Activated CD4-positive, alpha-beta memory T cell treated with anti-CD3 and anti-CD28 coated beads for 36 hours (primary cell): ENCODE measurements at regions of chr4 and their contacts with region 1.

Region 1: GRCh38 chr4:99563310-99564186 is at the start of gene TRMT10A:
- DNase-seq: peak; percentile 98
- H3K4me3 Mint-ChIP-seq: peak within 1 kb of the TSS; percentile 93
- H3K27ac Mint-ChIP-seq: peak within 1 kb of the TSS; percentile 98
- H3K4me1 Mint-ChIP-seq: peaks cover 6% of the 10 kb centered on the region
- H3K27me3 Mint-ChIP-seq: peaks cover 7% of the 10 kb centered on the region
- total RNA-seq, gene TRMT10A: 5.6 to 8.9 TPM

Region 2: GRCh38 chr4:98260579-98261290 is 1302.8 kb before region 1 on chr4:
- CTCF ChIA-PET with region 1: no interaction called
- POLR2A ChIA-PET with region 1: no interaction called
- intact Hi-C with region 1: loop called (anchors 10 kb)
- DNase-seq: peak; percentile 96
- H3K4me3 Mint-ChIP-seq: peak overlapping the region; percentile 95
- H3K27ac Mint-ChIP-seq: peak overlapping the region; percentile 97
- H3K4me1 Mint-ChIP-seq: peaks cover 43% of the 10 kb centered on the region
- H3K27me3 Mint-ChIP-seq: no peaks in the 10 kb centered on the region

Region 3: GRCh38 chr4:99504804-99505569 is 58.6 kb before region 1 on chr4:
- CTCF ChIA-PET with region 1: no interaction called
- POLR2A ChIA-PET with region 1: no interaction called
- intact Hi-C with region 1: loop called (anchors 1 kb)
- DNase-seq: no peak
- H3K4me3 Mint-ChIP-seq: no peak overlapping the region
- H3K27ac Mint-ChIP-seq: no peak overlapping the region
- H3K4me1 Mint-ChIP-seq: peaks cover 46% of the 10 kb centered on the region
- H3K27me3 Mint-ChIP-seq: no peaks in the 10 kb centered on the region

Region 4: GRCh38 chr4:99763635-99764101 is 200.1 kb after region 1 on chr4:
- CTCF ChIA-PET with region 1: no interaction called
- POLR2A ChIA-PET with region 1: no interaction called
- intact Hi-C with region 1: loop called (anchors 2 kb)
- DNase-seq: peak; percentile 38
- H3K4me3 Mint-ChIP-seq: no peak overlapping the region
- H3K27ac Mint-ChIP-seq: no peak overlapping the region
- H3K4me1 Mint-ChIP-seq: peaks cover 24% of the 10 kb centered on the region
- H3K27me3 Mint-ChIP-seq: peaks cover 12% of the 10 kb centered on the region

Region 5: DNA sequence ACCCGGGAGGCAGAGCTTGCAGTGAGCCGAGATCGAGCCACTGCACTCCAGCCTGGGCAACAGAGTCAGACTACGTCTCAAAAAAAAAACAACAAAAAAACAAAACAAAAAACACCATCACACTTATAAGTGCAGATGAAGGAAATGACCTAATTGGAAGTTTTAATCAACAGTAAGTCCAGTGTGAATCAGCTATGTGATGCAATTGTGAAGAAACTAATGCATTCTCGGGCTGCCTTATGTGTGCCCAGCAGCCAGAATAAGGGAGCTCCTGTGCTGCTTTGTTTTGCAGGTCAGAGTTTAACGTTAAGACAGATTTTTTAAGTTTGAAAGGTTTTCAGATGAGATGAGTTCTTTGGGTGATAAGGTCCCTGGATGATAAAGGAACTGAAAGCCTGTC is 263.9 kb after region 1 on chr4:
- CTCF ChIA-PET with region 1: no interaction called
- POLR2A ChIA-PET with region 1: no interaction called
- intact Hi-C with region 1: no loop called
- DNase-seq: no peak
- H3K4me3 Mint-ChIP-seq: no peak overlapping the region
- H3K27ac Mint-ChIP-seq: peak overlapping the region; percentile 55
- H3K4me1 Mint-ChIP-seq: peaks cover 51% of the 10 kb centered on the region
- H3K27me3 Mint-ChIP-seq: no peaks in the 10 kb centered on the region

Region 6: DNA sequence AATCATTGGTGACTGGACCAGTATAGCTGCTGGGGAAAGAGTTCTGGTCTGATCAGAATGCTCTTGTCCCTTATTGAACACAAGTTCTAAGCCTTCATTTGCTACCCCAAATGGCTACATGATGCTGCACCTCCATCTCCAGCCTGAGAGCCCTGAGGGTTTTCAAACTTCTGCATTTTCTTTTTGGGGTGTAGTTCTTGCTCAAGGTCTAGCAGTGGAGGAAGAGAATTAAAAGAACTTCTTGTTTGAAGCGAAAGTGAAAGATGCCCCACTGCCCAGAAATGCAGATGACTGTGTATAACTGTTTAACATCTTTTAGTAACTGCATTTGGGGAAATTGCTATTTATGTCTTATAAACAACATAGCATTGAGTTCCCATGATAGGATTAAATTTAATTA is 292.1 kb after region 1 on chr4:
- CTCF ChIA-PET with region 1: no interaction called
- POLR2A ChIA-PET with region 1: no interaction called
- intact Hi-C with region 1: loop called (anchors 1 kb)
- DNase-seq: peak; percentile 37
- H3K4me3 Mint-ChIP-seq: no peak overlapping the region
- H3K27ac Mint-ChIP-seq: peak overlapping the region; percentile 7
- H3K4me1 Mint-ChIP-seq: peaks cover 70% of the 10 kb centered on the region
- H3K27me3 Mint-ChIP-seq: no peaks in the 10 kb centered on the region

Region 7: GRCh38 chr4:99894161-99894997 is 330.8 kb after region 1 on chr4 and contains the start of gene LAMTOR3:
- CTCF ChIA-PET with region 1: interaction called, 6 read pairs
- POLR2A ChIA-PET with region 1: interaction called, 7 read pairs
- intact Hi-C with region 1: loop called (anchors 1 kb)
- DNase-seq: peak; percentile 94
- H3K4me3 Mint-ChIP-seq: peak within 1 kb of the TSS; percentile 98
- H3K27ac Mint-ChIP-seq: peak within 1 kb of the TSS; percentile 87
- H3K4me1 Mint-ChIP-seq: peaks cover 39% of the 10 kb centered on the region
- H3K27me3 Mint-ChIP-seq: no peaks in the 10 kb centered on the region
- total RNA-seq, gene LAMTOR3: 21.8 to 26.1 TPM